Activated T-helper 2 cell treated with anti-CD3 and anti-CD28 coated beads, Interferon-gamma antibody, Interleukin-2, Interleukin-4, amounts not matched to agents 10 μg/mL and 5 μg/mL and 100 μg/mL, durations not matched to agents 14 hours and 24 hours and 36 hours (primary cell): ENCODE measurements at regions of chr13 and their contacts with region 1.

Region 1: DNA sequence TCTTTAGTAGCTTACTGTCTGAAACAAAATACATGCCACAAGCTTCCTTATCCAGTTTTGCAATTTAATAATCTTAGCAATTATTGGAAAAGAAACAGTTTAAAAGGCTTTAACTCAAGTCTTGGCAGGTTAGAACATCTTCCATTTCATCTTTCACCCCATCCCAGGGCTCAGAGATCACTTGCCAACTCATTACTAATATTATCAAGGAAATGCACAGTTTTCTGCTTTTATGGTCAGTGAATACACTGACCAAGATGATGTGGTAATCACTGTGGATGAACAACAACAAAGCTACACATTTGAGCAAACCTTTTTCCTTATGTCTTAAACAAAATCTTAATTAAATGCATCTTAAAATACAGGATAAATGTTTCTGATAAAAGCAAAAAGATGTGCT is 48.0 kb upstream of the ITM2B start:
- DNase-seq: no peak
- H3K4me3 Mint-ChIP-seq: no peak overlapping the region
- H3K27ac Mint-ChIP-seq: no peak overlapping the region
- H3K4me1 Mint-ChIP-seq: peaks cover 22% of the 10 kb centered on the region
- H3K27me3 Mint-ChIP-seq: peaks cover 24% of the 10 kb centered on the region

Region 2: GRCh38 chr13:48155848-48156247 is 29.2 kb before region 1 on chr13:
- intact Hi-C with region 1: loop called (anchors 2 kb)
- DNase-seq: no peak
- H3K4me3 Mint-ChIP-seq: peak overlapping the region; percentile 24
- H3K27ac Mint-ChIP-seq: peak overlapping the region; percentile 65
- H3K4me1 Mint-ChIP-seq: peaks cover 48% of the 10 kb centered on the region
- H3K27me3 Mint-ChIP-seq: no peaks in the 10 kb centered on the region

Region 3: GRCh38 chr13:48222358-48223301 is 37.6 kb after region 1 on chr13:
- intact Hi-C with region 1: loop called (anchors 5 kb)
- DNase-seq: no peak
- H3K4me3 Mint-ChIP-seq: no peak overlapping the region
- H3K27ac Mint-ChIP-seq: no peak overlapping the region
- H3K4me1 Mint-ChIP-seq: peaks cover 35% of the 10 kb centered on the region
- H3K27me3 Mint-ChIP-seq: peaks cover 45% of the 10 kb centered on the region